Tibial artery (tissue), 4 donors: ENCODE measurements at regions of chr18 and their contacts with region 1.

Region 1: GRCh38 chr18:23416298-23416697 is 36.8 kb upstream of the RIOK3 start:
- DNase-seq: no peak
- H3K4me3 ChIP-seq: no peak overlapping the region
- H3K27ac ChIP-seq: no peak overlapping the region
- H3K4me1 ChIP-seq: no peaks in the 10 kb centered on the region
- H3K27me3 ChIP-seq: no peaks in the 10 kb centered on the region
- CTCF ChIP-seq: no peak

Region 2: DNA sequence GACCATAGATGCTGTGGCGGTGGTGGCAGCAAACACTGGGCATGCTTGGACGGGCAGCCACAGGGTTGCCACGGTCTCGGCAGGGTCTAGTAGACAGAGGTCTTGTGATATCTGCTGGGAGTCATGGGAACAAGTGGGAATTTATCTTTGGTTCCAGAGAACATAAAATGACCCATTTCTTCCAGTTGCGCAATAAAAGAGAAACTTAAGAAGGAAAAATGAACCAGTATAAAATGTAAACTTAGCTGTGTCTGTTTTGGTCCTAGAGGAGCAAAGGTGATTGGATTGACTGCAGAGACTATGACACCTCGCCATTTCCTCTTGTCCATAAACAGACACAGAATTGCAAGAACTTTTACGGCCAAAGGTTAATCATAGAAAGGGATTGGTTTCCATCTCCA is 615.7 kb before region 1 on chr18:
- intact Hi-C with region 1: loop called (anchors 10 kb)
- DNase-seq: peak; percentile 58 to 73
- H3K4me3 ChIP-seq: peak overlapping the region; percentile 3 to 24
- H3K27ac ChIP-seq: peak overlapping the region; percentile 73 to 79
- H3K4me1 ChIP-seq: peaks cover 0 to 34% (median 18%) of the 10 kb centered on the region in 4 donors
- H3K27me3 ChIP-seq: no peaks in the 10 kb centered on the region
- CTCF ChIP-seq: no peak

Region 3: DNA sequence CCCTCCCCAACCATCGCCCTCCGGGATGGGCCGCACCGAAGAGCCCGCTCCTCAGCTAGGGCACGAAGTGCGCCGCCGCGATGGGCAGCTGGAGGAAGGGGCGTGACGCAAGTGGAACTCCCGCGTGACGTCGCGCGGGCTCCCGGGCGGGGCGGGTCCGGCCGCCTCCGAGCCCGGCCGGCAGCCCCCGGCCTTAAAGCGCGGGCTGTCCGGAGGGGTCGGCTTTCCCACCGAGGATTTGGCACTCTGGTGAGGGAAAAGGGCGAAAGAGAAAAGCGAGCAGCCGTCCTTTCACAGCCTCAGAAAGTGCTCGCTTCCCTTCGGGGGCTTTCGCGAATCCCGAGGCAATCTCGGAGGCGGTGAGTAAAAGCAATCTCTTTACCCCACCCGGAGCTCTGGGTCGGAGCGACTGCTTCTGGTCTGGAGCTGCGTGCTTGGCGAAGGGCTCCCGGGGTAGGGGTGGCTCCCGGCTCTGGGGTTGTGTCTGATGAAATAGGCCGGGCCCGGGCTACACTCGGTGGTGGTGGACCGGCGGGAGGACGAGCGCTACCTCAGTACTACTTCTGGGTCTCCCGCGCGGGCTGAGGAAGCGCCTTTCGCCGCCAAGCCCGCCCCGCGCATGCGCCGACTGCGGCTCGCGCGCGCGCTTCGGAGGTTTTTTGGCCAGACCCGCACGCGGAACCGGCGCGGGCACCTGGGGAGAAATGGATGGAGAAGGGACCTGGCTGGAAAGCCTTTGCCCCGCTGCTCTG is 482.9 kb before region 1 on chr18 and contains the start of gene RBBP8:
- intact Hi-C with region 1: loop called (anchors 10 kb)
- DNase-seq: peak; percentile 75 to 91
- H3K4me3 ChIP-seq: peak within 1 kb of the TSS; percentile 72 to 83
- H3K27ac ChIP-seq: peak within 1 kb of the TSS; percentile 91 to 97
- H3K4me1 ChIP-seq: peaks cover 0 to 7% (median 3%) of the 10 kb centered on the region in 4 donors
- H3K27me3 ChIP-seq: no peaks in the 10 kb centered on the region
- CTCF ChIP-seq: no peak

Region 4: GRCh38 chr18:23032030-23032582 is 384.2 kb before region 1 on chr18:
- intact Hi-C with region 1: loop called (anchors 5 kb)
- DNase-seq: no peak
- H3K4me3 ChIP-seq: no peak overlapping the region
- H3K27ac ChIP-seq: no peak overlapping the region
- H3K4me1 ChIP-seq: peaks cover 0 to 13% (median 2%) of the 10 kb centered on the region in 4 donors
- H3K27me3 ChIP-seq: no peaks in the 10 kb centered on the region
- CTCF ChIP-seq: no peak

Region 5: DNA sequence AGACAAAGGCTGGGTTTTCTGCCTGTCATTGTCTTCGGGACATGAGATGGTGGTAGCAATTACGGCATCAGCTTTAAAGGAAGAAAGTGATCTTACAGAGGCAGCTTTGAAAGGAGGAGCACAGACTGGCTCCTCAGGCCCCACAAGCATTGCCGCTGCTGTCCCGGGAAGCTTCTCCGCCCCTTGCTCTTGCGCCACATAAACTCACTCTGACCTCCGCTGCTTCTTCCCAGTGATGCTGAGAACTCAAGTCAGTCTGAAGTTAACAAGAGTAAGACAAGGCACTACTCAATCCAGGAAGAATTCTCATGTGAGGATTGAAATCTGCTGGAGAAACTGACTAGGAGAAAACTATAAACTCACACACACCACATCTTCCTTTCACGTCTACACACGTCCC is 75.6 kb before region 1 on chr18:
- intact Hi-C with region 1: no loop called
- DNase-seq: peak in 1 of 2 donors; percentile 33
- H3K4me3 ChIP-seq: no peak overlapping the region
- H3K27ac ChIP-seq: peak overlapping the region in 1 of 2 donors; percentile 33
- H3K4me1 ChIP-seq: peaks cover 0 to 13% (median 2%) of the 10 kb centered on the region in 4 donors
- H3K27me3 ChIP-seq: no peaks in the 10 kb centered on the region
- CTCF ChIP-seq: no peak

Region 6: DNA sequence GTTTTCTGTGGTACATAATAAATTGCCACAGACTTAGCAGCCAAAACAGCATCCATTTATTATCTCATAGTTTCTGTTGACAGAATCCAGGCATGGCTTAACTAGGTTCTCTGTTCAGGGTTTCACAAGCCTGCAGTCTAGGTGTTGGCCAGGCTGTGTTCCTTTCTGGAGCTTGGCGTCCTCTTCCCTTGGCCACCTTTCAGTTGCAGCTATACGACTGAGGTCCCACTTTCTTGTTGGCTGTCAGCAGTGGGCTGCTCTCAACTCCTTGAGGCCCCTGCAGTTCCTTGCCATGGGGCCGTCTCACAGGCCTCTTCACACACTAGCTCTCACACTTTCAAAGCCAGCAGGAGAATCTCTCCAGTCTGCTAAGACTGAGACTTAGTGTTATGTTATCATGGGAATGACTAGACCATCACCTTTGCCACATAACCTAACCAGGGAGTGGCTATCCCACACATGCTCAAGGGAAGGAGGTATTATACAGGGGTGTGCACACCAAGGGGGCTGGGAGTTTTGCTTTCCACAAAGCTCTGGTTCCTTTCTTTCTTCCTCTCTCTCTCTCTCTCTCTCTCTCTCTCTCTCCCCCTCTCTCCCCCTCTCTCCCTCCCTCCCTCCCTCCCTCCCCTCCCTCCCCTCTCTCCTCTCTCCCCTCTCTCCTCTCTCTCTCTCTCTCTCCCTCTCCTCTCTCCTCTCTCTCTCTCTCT is 52.6 kb after region 1 on chr18:
- intact Hi-C with region 1: no loop called
- DNase-seq: no peak
- H3K4me3 ChIP-seq: no peak overlapping the region
- H3K27ac ChIP-seq: no peak overlapping the region
- H3K4me1 ChIP-seq: no peaks in the 10 kb centered on the region
- H3K27me3 ChIP-seq: no peaks in the 10 kb centered on the region
- CTCF ChIP-seq: no peak